AG04450 (cell line): ENCODE measurements at regions of chr18 and their contacts with region 1.

Region 1: DNA sequence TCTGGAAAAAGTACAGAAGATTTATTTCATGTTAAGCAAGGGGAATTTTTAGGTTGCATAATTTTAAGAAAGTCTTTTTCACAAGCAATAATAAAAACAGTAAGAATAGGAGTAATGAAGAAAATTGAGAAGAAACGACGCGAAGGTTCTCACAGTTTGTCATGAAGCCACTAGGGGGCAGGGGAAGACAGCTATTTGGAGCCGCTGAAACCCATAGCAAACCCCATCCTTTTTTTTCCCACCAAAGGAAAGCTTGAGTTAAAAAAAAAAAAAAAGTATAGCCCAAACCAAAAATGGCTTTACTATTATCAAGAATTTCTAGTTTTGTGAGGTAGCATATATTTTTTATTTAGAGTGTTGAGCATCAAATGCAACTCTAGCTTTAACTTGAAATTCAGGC is 300.9 kb downstream of the PHLPP1 start:
- DNase-seq: peak; percentile 15
- H3K4me3 ChIP-seq: no peak overlapping the region
- H3K27ac ChIP-seq: no peak overlapping the region
- H3K27me3 ChIP-seq: peaks cover 7% of the 10 kb centered on the region
- CTCF ChIP-seq: peak; percentile 86

Region 2: GRCh38 chr18:62827397-62827796 is 188.9 kb before region 1 on chr18:
- CTCF ChIA-PET with region 1: no interaction called
- POLR2A ChIA-PET with region 1: no interaction called
- DNase-seq: no peak
- H3K4me3 ChIP-seq: no peak overlapping the region
- H3K27ac ChIP-seq: no peak overlapping the region
- H3K27me3 ChIP-seq: no peaks in the 10 kb centered on the region
- CTCF ChIP-seq: no peak

Region 3: DNA sequence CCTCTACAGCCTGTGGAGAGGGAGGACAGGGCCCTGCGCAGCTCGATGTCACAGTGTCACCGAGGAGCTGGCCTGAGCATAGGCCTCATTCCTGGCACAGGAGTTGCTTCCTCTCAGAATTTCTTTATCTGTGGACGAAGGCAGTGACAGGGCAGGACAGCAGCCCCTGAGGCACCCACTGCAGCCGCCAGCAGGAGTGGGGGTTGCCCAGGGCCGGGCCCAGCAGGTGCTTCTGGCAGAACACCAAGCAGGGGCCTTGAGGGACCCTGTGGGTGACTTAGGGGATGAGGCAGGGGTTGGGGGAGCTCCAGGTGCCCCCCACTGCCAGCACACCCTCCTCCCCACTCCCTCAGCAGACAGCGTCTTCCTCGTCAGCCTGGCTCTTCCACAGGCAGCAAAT is 11.0 kb before region 1 on chr18:
- CTCF ChIA-PET with region 1: interaction called, 12 read pairs
- POLR2A ChIA-PET with region 1: no interaction called
- DNase-seq: no peak
- H3K4me3 ChIP-seq: no peak overlapping the region
- H3K27ac ChIP-seq: no peak overlapping the region
- H3K27me3 ChIP-seq: peaks cover 10% of the 10 kb centered on the region
- CTCF ChIP-seq: no peak

Region 4: GRCh38 chr18:63487676-63488075 is 471.4 kb after region 1 on chr18:
- CTCF ChIA-PET with region 1: no interaction called
- POLR2A ChIA-PET with region 1: no interaction called
- DNase-seq: no peak
- H3K4me3 ChIP-seq: no peak overlapping the region
- H3K27ac ChIP-seq: no peak overlapping the region
- H3K27me3 ChIP-seq: peaks cover 10% of the 10 kb centered on the region
- CTCF ChIP-seq: no peak